ENCODE measurements at regions of chr12 and their contacts with region 1.

Region 1: DNA sequence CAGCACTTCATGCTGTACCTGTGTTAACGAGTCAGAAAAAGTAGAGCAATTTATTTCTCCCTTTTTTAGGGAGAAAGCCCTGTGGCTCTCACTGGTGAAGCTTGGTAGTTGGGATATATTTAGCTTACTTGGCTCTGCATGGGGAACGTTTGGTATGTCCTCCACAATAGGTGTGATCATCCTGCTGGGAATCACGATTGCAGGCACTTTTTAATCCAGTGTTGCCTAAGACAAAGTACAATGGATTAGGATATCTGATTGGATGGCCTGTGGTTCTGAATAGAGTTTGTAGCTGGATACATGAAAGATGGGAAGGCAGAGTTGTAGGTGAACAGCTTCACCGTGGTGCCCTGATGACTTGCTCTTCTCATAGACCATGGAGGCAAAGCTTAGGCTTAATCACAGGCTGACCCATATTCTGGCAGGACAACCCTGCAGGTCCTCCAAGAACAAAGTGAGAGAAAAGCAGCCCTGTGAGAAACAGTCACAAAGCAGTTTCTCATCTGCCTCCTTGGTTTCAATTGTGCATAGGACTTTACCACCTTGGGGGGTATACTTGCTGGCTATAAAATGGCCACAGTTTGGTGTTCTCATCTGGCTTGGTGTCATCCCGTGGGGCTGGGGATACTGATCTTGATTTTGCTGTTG is 7.5 kb downstream of the RESF1 start:
- DNase-seq: no peak
- H3K4me3 ChIP-seq: peak overlapping the region in 1 of 3 donors; percentile 24
- H3K27ac ChIP-seq: peak overlapping the region; percentile 21 to 70
- H3K4me1 ChIP-seq: no peaks in the 10 kb centered on the region
- H3K27me3 ChIP-seq: no peaks in the 10 kb centered on the region
- CTCF ChIP-seq: no peak
- POLR2A ChIP-seq: no peak

Region 2: GRCh38 chr12:31989571-31990362 is 23.1 kb after region 1 on chr12:
- intact Hi-C with region 1: no loop called
- DNase-seq: no peak
- H3K4me3 ChIP-seq: no peak overlapping the region
- H3K27ac ChIP-seq: no peak overlapping the region
- H3K4me1 ChIP-seq: no peaks in the 10 kb centered on the region
- H3K27me3 ChIP-seq: no peaks in the 10 kb centered on the region
- CTCF ChIP-seq: no peak
- POLR2A ChIP-seq: no peak

Region 3: GRCh38 chr12:32918890-32919801 is 952.5 kb after region 1 on chr12:
- intact Hi-C with region 1: loop called (anchors 5 kb)
- DNase-seq: no peak
- H3K4me3 ChIP-seq: no peak overlapping the region
- H3K27ac ChIP-seq: no peak overlapping the region
- H3K4me1 ChIP-seq: no peaks in the 10 kb centered on the region
- H3K27me3 ChIP-seq: no peaks in the 10 kb centered on the region
- CTCF ChIP-seq: peak in 2 of 3 donors; percentile 31 to 55
- POLR2A ChIP-seq: no peak

Measured in breast epithelium (tissue), 4 donors.